ENCODE measurements at regions of chr10 and their contacts with region 1.

Region 1: GRCh38 chr10:7410862-7411670 is at the start of gene SFMBT2:
- DNase-seq: peak; percentile 79
- ATAC-seq: peak; percentile 67
- H3K4me3 ChIP-seq: peak within 1 kb of the TSS; percentile 58 to 85 (median 75)
- H3K4me3 Mint-ChIP-seq: peak within 1 kb of the TSS; percentile 93
- H3K27ac ChIP-seq: no peak within 1 kb of the TSS
- H3K27ac Mint-ChIP-seq: peak within 1 kb of the TSS; percentile 83
- H3K4me1 ChIP-seq: peaks cover 20 to 35% of the 10 kb centered on the region in 2 donors
- H3K4me1 Mint-ChIP-seq: peaks cover 43% of the 10 kb centered on the region
- H3K27me3 ChIP-seq: peaks cover 0 to 21% (median 11%) of the 10 kb centered on the region in 4 experiments
- H3K27me3 Mint-ChIP-seq: peaks cover 10% of the 10 kb centered on the region
- CTCF ChIP-seq: no peak
- total RNA-seq, gene SFMBT2: 24.0 and 26.5 TPM in 2 replicates

Region 2: GRCh38 chr10:6667679-6668270 is 743.3 kb before region 1 on chr10:
- CTCF ChIA-PET with region 1: interaction called, 6 read pairs
- POLR2A ChIA-PET with region 1: no interaction called
- intact Hi-C with region 1: loop called (anchors 2 kb)
- DNase-seq: no peak
- ATAC-seq: no peak
- H3K4me3 ChIP-seq: no peak overlapping the region
- H3K4me3 Mint-ChIP-seq: no peak overlapping the region
- H3K27ac ChIP-seq: no peak overlapping the region
- H3K27ac Mint-ChIP-seq: no peak overlapping the region
- H3K4me1 ChIP-seq: no peaks in the 10 kb centered on the region
- H3K4me1 Mint-ChIP-seq: no peaks in the 10 kb centered on the region
- H3K27me3 ChIP-seq: peaks cover 0 to 6% (median 0%) of the 10 kb centered on the region in 4 experiments
- H3K27me3 Mint-ChIP-seq: peaks cover 6% of the 10 kb centered on the region
- CTCF ChIP-seq: no peak

Region 3: GRCh38 chr10:7121154-7121810 is 289.8 kb before region 1 on chr10:
- CTCF ChIA-PET with region 1: interaction called, 55 read pairs
- POLR2A ChIA-PET with region 1: interaction called, 4 read pairs
- intact Hi-C with region 1: loop called (anchors 1 kb)
- DNase-seq: peak; percentile 78
- ATAC-seq: peak; percentile 80
- H3K4me3 ChIP-seq: no peak overlapping the region
- H3K4me3 Mint-ChIP-seq: no peak overlapping the region
- H3K27ac ChIP-seq: no peak overlapping the region
- H3K27ac Mint-ChIP-seq: no peak overlapping the region
- H3K4me1 ChIP-seq: peaks cover 4 to 5% of the 10 kb centered on the region in 2 donors
- H3K4me1 Mint-ChIP-seq: peaks cover 5% of the 10 kb centered on the region
- H3K27me3 ChIP-seq: no peaks in the 10 kb centered on the region
- H3K27me3 Mint-ChIP-seq: peaks cover 11% of the 10 kb centered on the region
- CTCF ChIP-seq: peak; percentile 82

Region 4: DNA sequence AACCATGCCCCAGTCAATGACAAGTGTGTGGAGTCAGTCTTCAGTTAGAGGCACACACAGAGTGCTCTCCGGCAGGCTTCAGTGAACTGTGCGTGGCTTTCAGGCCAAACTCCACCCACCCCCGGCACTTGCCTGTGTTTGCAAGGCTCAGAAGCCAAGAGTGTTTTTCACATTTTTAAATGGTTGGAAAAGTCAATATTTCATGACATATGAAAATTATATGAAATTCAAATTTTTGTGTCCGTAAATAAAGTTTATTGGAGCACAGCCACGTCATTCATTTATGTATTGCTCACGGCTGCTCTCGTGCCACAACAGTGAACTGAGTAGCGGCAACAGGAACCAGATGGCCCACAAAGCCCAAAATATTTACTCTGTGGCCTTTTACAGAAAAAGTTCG is 104.9 kb before region 1 on chr10:
- CTCF ChIA-PET with region 1: interaction called, 3 read pairs
- POLR2A ChIA-PET with region 1: interaction called, 3 read pairs
- intact Hi-C with region 1: loop called (anchors 2 kb)
- DNase-seq: peak; percentile 67
- ATAC-seq: peak; percentile 87
- H3K4me3 ChIP-seq: peak overlapping the region in 4 of 5 experiments; percentile 7 to 42 (median 24)
- H3K4me3 Mint-ChIP-seq: peak overlapping the region; percentile 82
- H3K27ac ChIP-seq: peak overlapping the region; percentile 66 to 90
- H3K27ac Mint-ChIP-seq: peak overlapping the region; percentile 96
- H3K4me1 ChIP-seq: peaks cover 31 to 38% of the 10 kb centered on the region in 2 donors
- H3K4me1 Mint-ChIP-seq: peaks cover 51% of the 10 kb centered on the region
- H3K27me3 ChIP-seq: no peaks in the 10 kb centered on the region
- H3K27me3 Mint-ChIP-seq: no peaks in the 10 kb centered on the region
- CTCF ChIP-seq: no peak

Region 5: DNA sequence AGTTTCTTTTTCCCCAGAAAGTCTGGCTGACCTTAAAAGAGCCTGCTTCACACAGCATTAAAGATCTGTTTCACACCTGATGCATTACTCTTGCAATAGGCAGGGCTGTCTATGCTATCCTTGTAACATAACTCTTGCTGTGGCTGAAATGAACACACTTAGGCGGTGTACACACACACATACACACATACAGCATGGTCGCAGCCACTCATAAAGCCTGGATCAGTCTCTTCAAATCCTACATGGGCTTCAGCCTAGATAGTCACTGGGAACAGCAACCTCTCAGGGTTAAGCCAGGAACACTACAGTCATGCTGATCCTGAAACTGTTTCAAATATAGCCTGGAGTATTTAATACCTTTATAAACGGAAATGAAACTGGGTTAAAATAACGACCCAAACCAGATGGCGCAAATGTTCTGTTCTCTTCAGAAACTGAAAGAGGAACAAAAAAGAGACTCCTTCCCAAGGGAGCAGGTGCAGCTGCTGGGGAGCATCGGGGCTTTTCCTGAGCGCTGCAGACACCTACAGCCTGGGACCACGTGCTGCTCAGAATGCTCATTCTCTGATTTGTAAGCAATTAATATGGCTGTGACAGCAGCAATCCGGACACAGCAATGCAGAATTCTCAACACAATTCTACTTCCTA is 60.8 kb after region 1 on chr10:
- CTCF ChIA-PET with region 1: no interaction called
- POLR2A ChIA-PET with region 1: no interaction called
- intact Hi-C with region 1: loop called (anchors 1 kb)
- DNase-seq: peak; percentile 94
- ATAC-seq: peak; percentile 93
- H3K4me3 ChIP-seq: peak overlapping the region in 4 of 5 experiments; percentile 6 to 57 (median 30)
- H3K4me3 Mint-ChIP-seq: peak overlapping the region; percentile 80
- H3K27ac ChIP-seq: peak overlapping the region; percentile 71 to 78
- H3K27ac Mint-ChIP-seq: peak overlapping the region; percentile 83
- H3K4me1 ChIP-seq: peaks cover 70% of the 10 kb centered on the region in 2 donors
- H3K4me1 Mint-ChIP-seq: peaks cover 69% of the 10 kb centered on the region
- H3K27me3 ChIP-seq: no peaks in the 10 kb centered on the region
- H3K27me3 Mint-ChIP-seq: no peaks in the 10 kb centered on the region
- CTCF ChIP-seq: no peak

Measured in B cell (primary cell).